Left lung (tissue), 14 donors: ENCODE measurements at regions of chr9 and their contacts with region 1.

Region 1: GRCh38 chr9:34403554-34404380 is 27.1 kb upstream of the MYORG start:
- DNase-seq: peak in 3 of 4 donors; percentile 16 to 58 (median 53)
- ATAC-seq: peak; percentile 89
- H3K4me3 ChIP-seq: no peak overlapping the region
- H3K27ac ChIP-seq: no peak overlapping the region
- H3K4me1 ChIP-seq: peaks cover 0 to 3% of the 10 kb centered on the region in 2 donors
- H3K27me3 ChIP-seq: no peaks in the 10 kb centered on the region
- CTCF ChIP-seq: peak; percentile 95 to 97

Region 2: GRCh38 chr9:34106110-34106509 is 297.7 kb before region 1 on chr9:
- intact Hi-C with region 1: no loop called
- DNase-seq: no peak
- ATAC-seq: no peak
- H3K4me3 ChIP-seq: no peak overlapping the region
- H3K27ac ChIP-seq: no peak overlapping the region
- H3K4me1 ChIP-seq: no peaks in the 10 kb centered on the region
- H3K27me3 ChIP-seq: no peaks in the 10 kb centered on the region
- CTCF ChIP-seq: no peak

Region 3: DNA sequence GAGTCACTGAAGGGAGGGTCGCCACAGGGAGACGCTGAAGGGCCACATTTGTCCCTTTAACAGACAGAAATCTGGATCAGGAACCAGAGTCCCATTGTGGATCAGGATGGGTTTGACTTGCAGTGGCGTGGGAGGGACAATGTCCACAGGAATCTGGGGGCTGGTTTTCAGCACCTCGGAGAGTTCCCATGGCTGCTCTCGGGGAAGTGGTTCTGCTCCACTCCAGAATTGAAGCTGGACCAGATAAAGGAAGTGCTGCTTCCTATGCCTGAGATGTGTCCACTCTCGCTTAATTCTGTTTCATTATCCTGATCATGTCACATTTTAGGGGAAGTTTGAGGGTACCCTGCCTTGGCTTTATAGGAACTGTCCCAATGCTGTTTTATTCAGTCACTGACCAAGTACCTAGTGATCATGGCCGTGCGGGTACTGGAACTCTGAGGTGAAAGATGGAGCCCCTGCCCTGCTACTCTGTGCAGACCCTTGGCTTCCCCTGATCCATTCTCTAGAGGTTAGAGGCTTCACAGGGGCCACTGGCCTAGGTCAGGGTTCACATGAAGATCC is 90.3 kb after region 1 on chr9:
- intact Hi-C with region 1: loop called in 1 of 2 experiments (anchors 10 kb)
- DNase-seq: peak in 2 of 4 donors; percentile 40 to 64
- ATAC-seq: peak; percentile 83
- H3K4me3 ChIP-seq: no peak overlapping the region
- H3K27ac ChIP-seq: no peak overlapping the region
- H3K4me1 ChIP-seq: no peaks in the 10 kb centered on the region
- H3K27me3 ChIP-seq: peaks cover 0 to 11% of the 10 kb centered on the region in 2 donors
- CTCF ChIP-seq: no peak

Region 4: DNA sequence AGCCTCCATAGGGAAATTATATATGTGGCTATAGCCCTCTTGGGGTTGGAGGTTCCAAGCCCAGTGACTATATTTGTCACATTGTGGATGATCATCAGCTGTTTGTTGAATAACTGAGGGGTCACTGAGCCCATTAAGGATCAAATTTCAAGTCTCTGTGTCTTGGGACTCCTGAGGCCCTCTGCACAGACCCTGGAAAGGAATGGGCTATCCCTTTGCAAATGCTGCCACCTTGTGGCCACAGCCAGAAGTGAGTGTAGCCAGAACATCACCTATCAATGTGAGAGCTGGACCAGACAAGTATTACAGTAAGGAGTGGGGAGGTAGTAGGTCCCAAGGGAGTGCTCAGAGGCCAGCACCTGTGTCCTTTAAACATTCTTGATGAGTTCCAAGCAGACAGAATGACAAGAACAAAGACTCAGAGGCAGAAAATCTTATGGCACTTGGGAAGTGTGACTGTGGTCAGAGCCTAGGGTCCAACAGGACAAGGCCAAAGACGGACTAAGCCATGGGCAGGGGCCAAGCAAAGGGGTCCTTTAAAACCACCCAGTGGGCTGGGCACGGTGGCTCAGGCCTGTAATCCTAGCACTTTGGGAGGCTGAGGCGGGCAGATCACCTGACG is 200.0 kb after region 1 on chr9:
- intact Hi-C with region 1: loop called in 1 of 2 experiments (anchors 10 kb)
- DNase-seq: peak; percentile 70 to 88 (median 78)
- ATAC-seq: peak; percentile 96
- H3K4me3 ChIP-seq: no peak overlapping the region
- H3K27ac ChIP-seq: no peak overlapping the region
- H3K4me1 ChIP-seq: no peaks in the 10 kb centered on the region
- H3K27me3 ChIP-seq: no peaks in the 10 kb centered on the region
- CTCF ChIP-seq: peak; percentile 91 to 92

Region 5: DNA sequence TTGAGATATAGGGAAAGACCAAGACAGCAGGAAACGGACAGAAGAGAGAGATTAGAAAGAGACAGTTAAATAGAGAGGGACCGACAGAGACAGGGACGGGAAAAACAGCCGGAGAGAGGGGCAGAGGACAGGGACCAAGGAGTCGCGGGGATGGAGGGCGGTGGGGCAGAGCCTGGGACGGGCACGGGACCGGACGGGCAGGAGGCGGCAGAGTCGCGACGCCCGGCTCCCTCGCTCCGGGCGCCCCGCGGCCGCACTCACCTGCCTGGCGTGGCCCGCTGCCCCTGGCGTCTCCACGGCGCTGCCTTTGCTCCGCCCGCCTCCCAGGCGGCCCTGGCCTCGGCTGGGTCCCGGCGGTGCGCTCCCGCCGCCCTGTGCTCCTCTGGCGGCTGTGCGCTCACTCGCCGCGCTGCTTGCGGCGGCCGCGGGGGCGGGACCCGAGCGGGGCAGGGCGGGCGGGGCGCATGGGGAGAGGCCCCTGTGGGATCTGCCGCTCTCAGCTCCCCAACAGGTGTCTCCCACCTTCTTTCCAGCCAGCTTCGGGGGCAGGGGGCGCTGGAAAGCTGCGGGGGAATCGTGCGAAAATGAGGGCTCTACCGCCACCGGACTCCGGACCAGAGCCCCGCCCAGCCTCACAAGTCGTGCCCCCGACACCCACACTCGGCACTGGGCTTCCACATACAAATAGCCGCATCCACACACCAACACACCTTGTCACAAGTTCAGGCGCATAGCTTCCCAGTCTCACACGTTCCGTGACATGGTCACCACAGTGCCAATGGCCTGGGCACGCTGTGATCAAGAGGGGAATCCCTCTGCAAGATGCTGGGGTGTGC is 225.1 kb after region 1 on chr9 and contains the start of gene ARID3C:
- intact Hi-C with region 1: no loop called
- DNase-seq: peak in 1 of 4 donors; percentile 86
- ATAC-seq: peak; percentile 84
- H3K4me3 ChIP-seq: peak within 1 kb of the TSS; percentile 21 to 25
- H3K27ac ChIP-seq: no peak within 1 kb of the TSS
- H3K4me1 ChIP-seq: peaks cover 0 to 13% of the 10 kb centered on the region in 2 donors
- H3K27me3 ChIP-seq: peaks cover 60 to 74% of the 10 kb centered on the region in 2 donors
- CTCF ChIP-seq: no peak
- polyA plus RNA-seq, gene ARID3C: 0.13 to 0.24 (median 0.15) TPM in 3 of 6 donors, not detected in the others